Left cardiac atrium (tissue), 4 donors: ENCODE measurements at regions of chr5 and their contacts with region 1.

Region 1: GRCh38 chr5:144203750-144204596 is 33.3 kb downstream of the KCTD16 start:
- DNase-seq: no peak
- ATAC-seq: peak; percentile 74 to 75

Region 2: DNA sequence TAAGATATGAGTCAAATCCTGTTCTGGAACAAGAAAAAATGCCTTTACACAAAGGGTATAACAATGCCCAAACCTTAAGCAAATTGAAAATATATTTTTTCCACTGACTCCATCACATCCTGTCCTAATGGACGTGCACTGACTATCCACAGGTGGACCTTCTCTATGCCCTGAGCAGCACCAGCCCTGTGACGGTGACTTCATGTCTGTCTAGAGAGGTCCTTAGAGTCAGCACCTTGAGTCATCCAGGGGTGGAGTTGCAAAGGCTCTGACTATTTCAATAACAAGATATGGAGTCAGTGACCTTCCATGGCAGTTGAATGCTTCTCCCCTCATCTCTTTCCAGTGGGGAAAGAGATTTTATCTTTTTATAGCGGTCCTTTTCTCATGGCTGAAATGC is 111.5 kb before region 1 on chr5:
- intact Hi-C with region 1: no loop called
- DNase-seq: no peak
- ATAC-seq: no peak

Region 3: GRCh38 chr5:144390133-144390532 is 186.2 kb after region 1 on chr5:
- intact Hi-C with region 1: loop called in 1 of 2 experiments (anchors 10 kb)
- DNase-seq: no peak
- ATAC-seq: no peak

Region 4: GRCh38 chr5:145237843-145238242 is 1033.9 kb after region 1 on chr5:
- intact Hi-C with region 1: loop called (anchors 10 kb)
- DNase-seq: no peak
- ATAC-seq: peak in 1 of 2 donors; percentile 32

Region 5: GRCh38 chr5:145825751-145826180 is 1621.8 kb after region 1 on chr5:
- intact Hi-C with region 1: loop called in 1 of 2 experiments (anchors 5 kb)
- DNase-seq: no peak
- ATAC-seq: peak in 1 of 2 donors; percentile 22